H1 (cell line): ENCODE measurements at regions of chr12 and their contacts with region 1.

Region 1: GRCh38 chr12:10562306-10562933 is 51.0 kb downstream of the MAGOHB start:
- DNase-seq: no peak
- H3K4me3 ChIP-seq: no peak overlapping the region
- H3K27ac ChIP-seq: no peak overlapping the region
- H3K4me1 ChIP-seq: peaks cover 0 to 1% (median under 1%) of the 10 kb centered on the region in 4 experiments; a peak in 2 of 7 replicates
- H3K27me3 ChIP-seq: no peaks in the 10 kb centered on the region
- CTCF ChIP-seq: peak in 2 of 3 experiments; percentile 40 to 53; a peak in 2 of 4 replicates
- EP300 ChIP-seq: no peak
- POLR2A ChIP-seq: no peak
- RAD21 ChIP-seq: peak; percentile 77 to 81

Region 2: GRCh38 chr12:10235761-10236631 is 326.4 kb before region 1 on chr12:
- CTCF ChIA-PET with region 1: interaction called, 31 read pairs
- POLR2A ChIA-PET with region 1: no interaction called
- DNase-seq: peak in 1 of 2 experiments; percentile 48
- H3K4me3 ChIP-seq: no peak overlapping the region
- H3K27ac ChIP-seq: no peak overlapping the region
- H3K4me1 ChIP-seq: no peaks in the 10 kb centered on the region
- H3K27me3 ChIP-seq: no peaks in the 10 kb centered on the region
- CTCF ChIP-seq: peak; percentile 49 to 78 (median 72)
- EP300 ChIP-seq: no peak
- POLR2A ChIP-seq: no peak
- RAD21 ChIP-seq: peak; percentile 91 to 92

Region 3: GRCh38 chr12:10331642-10332239 is 230.7 kb before region 1 on chr12:
- CTCF ChIA-PET with region 1: interaction called, 32 read pairs
- POLR2A ChIA-PET with region 1: no interaction called
- DNase-seq: no peak
- H3K4me3 ChIP-seq: no peak overlapping the region
- H3K27ac ChIP-seq: no peak overlapping the region
- H3K4me1 ChIP-seq: no peaks in the 10 kb centered on the region
- H3K27me3 ChIP-seq: no peaks in the 10 kb centered on the region
- CTCF ChIP-seq: peak in 2 of 3 experiments; percentile 76 to 90; a peak in 3 of 4 replicates
- EP300 ChIP-seq: no peak
- POLR2A ChIP-seq: no peak
- RAD21 ChIP-seq: peak; percentile 90 to 91

Region 4: GRCh38 chr12:10364815-10365622 is 197.4 kb before region 1 on chr12:
- CTCF ChIA-PET with region 1: interaction called, 33 read pairs
- POLR2A ChIA-PET with region 1: no interaction called
- DNase-seq: no peak
- H3K4me3 ChIP-seq: peak overlapping the region; percentile 34 to 63 (median 50)
- H3K27ac ChIP-seq: peak overlapping the region; percentile 16
- H3K4me1 ChIP-seq: peaks cover 14 to 33% (median 21%) of the 10 kb centered on the region in 4 experiments; a peak in 6 of 7 replicates
- H3K27me3 ChIP-seq: no peaks in the 10 kb centered on the region
- CTCF ChIP-seq: no peak
- EP300 ChIP-seq: no peak
- POLR2A ChIP-seq: no peak
- RAD21 ChIP-seq: no peak

Region 5: DNA sequence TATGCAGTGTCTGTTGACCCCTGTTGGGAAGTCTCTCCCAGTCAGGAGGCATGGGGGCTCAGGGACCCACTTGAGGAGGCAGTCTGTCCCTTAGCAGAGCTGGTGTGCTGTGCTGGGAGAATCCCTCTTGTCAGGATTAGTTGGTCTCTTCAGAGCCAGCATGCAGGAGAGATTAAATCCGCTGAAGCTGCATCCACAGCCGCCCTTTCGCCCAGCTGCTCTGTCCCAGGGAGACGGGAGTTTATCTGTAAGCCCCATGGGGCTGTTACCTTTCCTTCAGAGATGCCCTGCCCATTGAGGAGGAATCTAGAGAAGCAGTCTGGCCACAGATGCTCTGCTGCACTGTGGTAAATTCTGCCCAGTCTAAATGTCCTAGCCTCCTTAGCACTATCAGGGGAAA is 96.1 kb before region 1 on chr12:
- CTCF ChIA-PET with region 1: no interaction called
- POLR2A ChIA-PET with region 1: no interaction called
- DNase-seq: no peak
- H3K4me3 ChIP-seq: no peak overlapping the region
- H3K27ac ChIP-seq: no peak overlapping the region
- H3K4me1 ChIP-seq: no peaks in the 10 kb centered on the region
- H3K27me3 ChIP-seq: no peaks in the 10 kb centered on the region
- CTCF ChIP-seq: no peak
- EP300 ChIP-seq: no peak
- POLR2A ChIP-seq: no peak
- RAD21 ChIP-seq: no peak

Region 6: DNA sequence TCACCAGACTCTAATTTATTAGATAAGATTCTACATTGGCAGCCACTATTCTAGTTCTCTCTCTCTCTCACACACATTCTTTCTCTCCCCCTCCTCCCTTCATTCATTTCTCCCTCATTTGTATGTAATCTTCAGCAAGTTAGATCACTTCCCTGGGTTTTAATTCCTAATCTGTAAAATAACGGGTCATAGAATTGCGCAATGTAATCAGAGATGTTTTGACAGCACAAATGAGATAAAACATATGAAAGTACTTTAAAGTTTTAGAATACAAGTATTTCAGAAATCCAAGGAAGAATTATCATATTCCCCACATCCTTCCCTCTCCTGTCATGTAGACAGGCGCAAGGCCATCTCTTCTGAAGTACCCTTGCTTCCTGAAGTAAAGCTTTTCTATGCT is 89.8 kb after region 1 on chr12:
- CTCF ChIA-PET with region 1: no interaction called
- POLR2A ChIA-PET with region 1: no interaction called
- DNase-seq: no peak
- H3K4me3 ChIP-seq: no peak overlapping the region
- H3K27ac ChIP-seq: no peak overlapping the region
- H3K4me1 ChIP-seq: no peaks in the 10 kb centered on the region
- H3K27me3 ChIP-seq: no peaks in the 10 kb centered on the region
- CTCF ChIP-seq: no peak
- EP300 ChIP-seq: no peak
- POLR2A ChIP-seq: no peak
- RAD21 ChIP-seq: no peak